ENCODE measurements at regions of chr5 and their contacts with region 1.

Region 1: DNA sequence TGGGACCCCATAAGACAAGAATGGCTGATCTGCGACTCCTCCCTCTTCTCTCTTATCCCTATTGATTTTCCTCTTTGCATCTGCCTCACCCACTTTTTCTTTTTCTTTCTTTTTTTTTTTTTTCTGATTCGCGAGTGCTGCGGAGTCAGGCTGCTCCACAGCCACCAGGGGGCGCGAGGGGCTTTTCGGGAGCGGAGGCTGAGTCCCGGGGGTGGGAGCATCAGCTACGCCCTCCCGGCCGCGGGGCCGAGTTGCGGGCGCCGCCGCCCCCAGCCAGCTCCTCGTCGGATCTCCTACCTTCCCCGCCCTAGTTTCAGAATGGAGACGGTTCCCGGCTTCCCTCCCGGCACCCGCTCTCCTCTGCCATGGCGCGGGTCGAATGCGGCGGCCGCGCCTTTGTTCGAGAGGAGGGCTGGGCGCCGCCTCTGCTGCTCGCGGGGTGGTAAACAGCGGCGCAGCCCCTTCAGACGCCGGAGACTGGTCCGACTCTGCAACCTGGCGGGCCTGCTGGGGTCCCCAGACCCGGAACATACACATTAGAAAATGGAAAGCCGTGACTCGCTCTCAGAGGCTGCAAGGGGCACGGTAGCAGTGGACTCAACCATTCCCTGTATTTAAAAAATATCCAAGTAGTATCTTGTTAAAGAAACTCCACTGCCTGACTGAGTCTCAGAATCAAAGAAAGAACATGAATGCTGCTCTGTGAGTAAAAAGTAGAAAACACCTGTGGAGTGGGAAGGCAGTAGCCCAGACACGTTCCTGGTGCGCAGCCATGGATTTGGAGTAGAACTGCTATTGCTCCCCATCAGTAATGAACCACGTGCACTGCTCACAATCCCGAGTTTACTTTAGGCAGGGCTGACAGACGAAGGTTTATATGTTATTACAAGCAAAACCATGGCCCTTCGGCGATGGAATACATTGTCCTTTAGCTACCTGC is 55.7 kb downstream of the DPYSL3 start:
- DNase-seq: peak; percentile 96
- H3K4me3 ChIP-seq: peak overlapping the region; percentile 62 to 90 (median 89)
- H3K27ac ChIP-seq: peak overlapping the region; percentile 92 to 98 (median 97)
- H3K4me1 ChIP-seq: peaks cover 0 to 50% (median 43%) of the 10 kb centered on the region in 4 donors
- H3K27me3 ChIP-seq: no peaks in the 10 kb centered on the region
- CTCF ChIP-seq: peak; percentile 78 to 88 (median 84)
- EP300 ChIP-seq: peak in 2 of 4 donors; percentile 6 to 26
- POLR2A ChIP-seq: peak in 1 of 2 donors; percentile 9

Region 2: DNA sequence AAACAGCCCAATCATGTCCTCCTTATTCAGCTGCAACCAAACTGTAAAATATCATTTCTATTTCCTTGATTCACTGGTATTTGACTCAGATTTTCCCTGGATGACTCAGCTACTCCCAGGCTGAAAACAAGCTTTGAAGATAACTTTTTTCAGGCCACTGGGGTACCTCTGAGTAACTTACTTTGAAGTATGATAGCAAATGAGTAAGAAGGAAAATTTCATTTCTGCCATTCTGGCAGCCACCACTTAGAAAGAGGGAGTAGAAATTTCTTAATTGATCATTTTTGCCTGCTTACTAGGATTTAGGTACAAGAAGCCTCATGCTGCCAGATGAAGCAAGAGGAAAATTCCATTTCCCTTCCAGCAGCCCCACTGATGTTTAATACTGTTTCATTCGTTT is 1866.4 kb before region 1 on chr5:
- intact Hi-C with region 1: no loop called
- DNase-seq: no peak
- H3K4me3 ChIP-seq: no peak overlapping the region
- H3K27ac ChIP-seq: no peak overlapping the region
- H3K4me1 ChIP-seq: no peaks in the 10 kb centered on the region
- H3K27me3 ChIP-seq: no peaks in the 10 kb centered on the region
- CTCF ChIP-seq: no peak
- EP300 ChIP-seq: no peak
- POLR2A ChIP-seq: no peak

Region 3: GRCh38 chr5:147234825-147235635 is 219.1 kb before region 1 on chr5 and contains the start of gene STK32A:
- intact Hi-C with region 1: loop called (anchors 2 kb)
- DNase-seq: peak; percentile 84
- H3K4me3 ChIP-seq: peak within 1 kb of the TSS; percentile 62 to 76 (median 70)
- H3K27ac ChIP-seq: peak within 1 kb of the TSS; percentile 63 to 81 (median 76)
- H3K4me1 ChIP-seq: peaks cover 0 to 12% (median 8%) of the 10 kb centered on the region in 4 donors
- H3K27me3 ChIP-seq: no peaks in the 10 kb centered on the region
- CTCF ChIP-seq: no peak
- EP300 ChIP-seq: no peak
- POLR2A ChIP-seq: no peak
- total RNA-seq, gene STK32A: 4.3 to 9.1 (median 5.1) TPM

Region 4: DNA sequence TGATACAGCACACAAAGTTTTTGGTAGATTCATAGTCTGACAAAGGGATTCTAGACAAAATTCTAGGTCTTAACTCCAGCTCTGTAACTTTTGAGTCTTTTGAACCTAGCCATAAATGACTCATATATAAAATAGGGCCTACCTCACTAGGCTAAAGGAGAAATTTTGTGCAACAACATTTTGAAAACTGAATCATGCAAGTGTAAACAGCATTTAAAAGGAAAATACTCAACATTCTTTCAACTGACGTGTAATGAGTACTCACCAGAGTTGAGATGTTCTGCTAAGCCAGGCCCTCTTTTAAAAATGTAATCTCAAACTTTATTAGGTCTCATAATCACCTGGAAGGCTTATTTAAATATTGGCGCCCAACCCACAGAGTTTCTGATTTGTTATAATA is 106.1 kb before region 1 on chr5:
- intact Hi-C with region 1: no loop called
- DNase-seq: no peak
- H3K4me3 ChIP-seq: no peak overlapping the region
- H3K27ac ChIP-seq: no peak overlapping the region
- H3K4me1 ChIP-seq: no peaks in the 10 kb centered on the region
- H3K27me3 ChIP-seq: no peaks in the 10 kb centered on the region
- CTCF ChIP-seq: no peak
- EP300 ChIP-seq: no peak
- POLR2A ChIP-seq: no peak

Region 5: GRCh38 chr5:147403651-147404640 is 50.2 kb before region 1 on chr5:
- intact Hi-C with region 1: loop called (anchors 2 kb)
- DNase-seq: peak; percentile 93
- H3K4me3 ChIP-seq: no peak overlapping the region
- H3K27ac ChIP-seq: peak overlapping the region; percentile 77 to 94 (median 89)
- H3K4me1 ChIP-seq: peaks cover 2 to 75% (median 52%) of the 10 kb centered on the region in 4 donors
- H3K27me3 ChIP-seq: no peaks in the 10 kb centered on the region
- CTCF ChIP-seq: no peak
- EP300 ChIP-seq: peak; percentile 50 to 87 (median 78)
- POLR2A ChIP-seq: no peak

Region 6: GRCh38 chr5:147509710-147510651 is 55.8 kb after region 1 on chr5 and contains the start of gene DPYSL3:
- intact Hi-C with region 1: loop called (anchors 1 kb)
- DNase-seq: peak; percentile 94
- H3K4me3 ChIP-seq: peak within 1 kb of the TSS; percentile 77 to 81 (median 80)
- H3K27ac ChIP-seq: peak within 1 kb of the TSS; percentile 87 to 94 (median 92)
- H3K4me1 ChIP-seq: peaks cover 0 to 47% (median 26%) of the 10 kb centered on the region in 4 donors
- H3K27me3 ChIP-seq: no peaks in the 10 kb centered on the region
- CTCF ChIP-seq: peak in 3 of 4 experiments; percentile 7 to 38 (median 21)
- EP300 ChIP-seq: peak in 2 of 4 donors; percentile 67 to 75
- POLR2A ChIP-seq: peak; percentile 20 to 58
- total RNA-seq, gene DPYSL3: 149 to 343 (median 184) TPM

Measured in sigmoid colon (tissue), 7 donors.